ENCODE measurements at regions of chr10 and their contacts with region 1.

Region 1: GRCh38 chr10:132185601-132186487 is 904 bp upstream of the DPYSL4 start:
- DNase-seq: no peak
- H3K4me3 ChIP-seq: peak overlapping the region; percentile 26 to 54
- H3K27ac ChIP-seq: no peak overlapping the region
- H3K4me1 ChIP-seq: peaks cover 21% of the 10 kb centered on the region
- H3K27me3 ChIP-seq: peaks cover 7% of the 10 kb centered on the region
- CTCF ChIP-seq: no peak
- POLR2A ChIP-seq: no peak

Region 2: DNA sequence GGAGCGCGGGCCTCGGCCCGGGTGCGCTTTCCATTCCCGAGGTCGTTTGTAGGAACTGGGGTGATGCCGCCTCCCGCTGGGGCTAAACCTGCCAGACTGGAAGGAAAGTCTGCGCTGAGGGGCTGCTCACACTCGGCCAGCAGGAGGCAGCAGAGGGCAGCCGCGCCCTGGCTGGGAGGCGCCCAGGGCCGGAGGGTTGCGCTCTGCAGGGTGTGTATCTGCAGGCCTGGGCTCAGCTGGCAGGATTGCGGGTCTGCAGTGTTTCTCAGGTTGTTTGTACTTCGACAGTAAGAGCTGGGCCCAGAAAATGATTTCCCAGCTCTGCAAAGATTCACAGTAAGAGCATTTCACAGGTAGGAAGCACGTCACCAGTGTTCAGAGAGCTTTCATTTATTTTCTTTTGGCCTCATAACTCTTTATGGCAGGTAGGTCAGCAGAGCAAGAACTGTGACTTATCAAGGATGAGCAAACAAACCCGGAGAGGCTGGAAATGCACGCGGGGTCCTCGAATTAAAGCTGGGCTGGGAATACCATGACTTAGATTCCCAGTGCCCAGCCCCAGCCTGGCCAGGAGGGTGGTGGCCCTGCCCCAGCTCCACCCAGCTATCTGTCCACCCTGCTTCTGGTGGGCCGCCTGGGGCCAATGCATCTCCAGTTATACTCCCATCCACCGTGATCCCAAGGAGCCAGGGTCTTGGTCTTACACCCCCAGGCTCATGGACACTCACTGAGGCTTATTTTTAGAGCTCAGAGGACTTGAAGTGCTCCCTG is 300.3 kb before region 1 on chr10:
- intact Hi-C with region 1: no loop called
- DNase-seq: no peak
- H3K4me3 ChIP-seq: no peak overlapping the region
- H3K27ac ChIP-seq: no peak overlapping the region
- H3K4me1 ChIP-seq: no peaks in the 10 kb centered on the region
- H3K27me3 ChIP-seq: no peaks in the 10 kb centered on the region
- CTCF ChIP-seq: peak; percentile 85 to 96 (median 93)
- POLR2A ChIP-seq: no peak

Region 3: GRCh38 chr10:132107186-132107948 is 78.5 kb before region 1 on chr10:
- intact Hi-C with region 1: no loop called
- DNase-seq: peak; percentile 82 to 87
- H3K4me3 ChIP-seq: no peak overlapping the region
- H3K27ac ChIP-seq: no peak overlapping the region
- H3K4me1 ChIP-seq: no peaks in the 10 kb centered on the region
- H3K27me3 ChIP-seq: no peaks in the 10 kb centered on the region
- CTCF ChIP-seq: no peak
- POLR2A ChIP-seq: no peak

Region 4: DNA sequence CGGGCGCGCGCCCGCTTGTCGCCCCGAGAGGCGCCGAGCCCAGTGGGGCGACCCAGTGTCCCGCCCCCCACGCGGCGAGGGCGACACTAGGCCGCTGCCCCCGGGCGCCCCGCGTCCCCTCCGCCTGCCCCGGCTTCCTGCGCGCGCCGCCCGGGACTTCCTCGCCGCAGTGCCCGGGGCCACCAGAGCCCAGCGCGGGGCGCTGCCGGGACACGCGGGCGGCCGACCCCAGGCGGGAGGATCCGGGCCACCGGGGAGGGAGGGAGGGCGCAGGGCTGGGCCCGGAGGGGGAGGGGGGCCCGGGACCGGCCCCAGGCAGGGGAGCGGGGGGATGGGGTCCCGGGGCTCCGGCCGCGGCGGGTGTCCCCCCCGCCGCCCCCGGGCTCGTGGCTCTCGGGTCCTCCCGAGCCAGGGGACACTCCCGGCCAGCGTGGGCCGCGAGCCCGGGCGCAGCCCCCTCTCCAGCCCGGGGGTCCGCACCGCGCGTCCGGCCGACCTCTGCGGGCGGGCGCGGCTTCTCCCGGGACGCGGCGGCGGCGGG is 210.7 kb after region 1 on chr10:
- intact Hi-C with region 1: no loop called
- DNase-seq: no peak
- H3K4me3 ChIP-seq: peak overlapping the region; percentile 77 to 80
- H3K27ac ChIP-seq: peak overlapping the region; percentile 96
- H3K4me1 ChIP-seq: peaks cover 59% of the 10 kb centered on the region
- H3K27me3 ChIP-seq: no peaks in the 10 kb centered on the region
- CTCF ChIP-seq: no peak
- POLR2A ChIP-seq: no peak

Region 5: DNA sequence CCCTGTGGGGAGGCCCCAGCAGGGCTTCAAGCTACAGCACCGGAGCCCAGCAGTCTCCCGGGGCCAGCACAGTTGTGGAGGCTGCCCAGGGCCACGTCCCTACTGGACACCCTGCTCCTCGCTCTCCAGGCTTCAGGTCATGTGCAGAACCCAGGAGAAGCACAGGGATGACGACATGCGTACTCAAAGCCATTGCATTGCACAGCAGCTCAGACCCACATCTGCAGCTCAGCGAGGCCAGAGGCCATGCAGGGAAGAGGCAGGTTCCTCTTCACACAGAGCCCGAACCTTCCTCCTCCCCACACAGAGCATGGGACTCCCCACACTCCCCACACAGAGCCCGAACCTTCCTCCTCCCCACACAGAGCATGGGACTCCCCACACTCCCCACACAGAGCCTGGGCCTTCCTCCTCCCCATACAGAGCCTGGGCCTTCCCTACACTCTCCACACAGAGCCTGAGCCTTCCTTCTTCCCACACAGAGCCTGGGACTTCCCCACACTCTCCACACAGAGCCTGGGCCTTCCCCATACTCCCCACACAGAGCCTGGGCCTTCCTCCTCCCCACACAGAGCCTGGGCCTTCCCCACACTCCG is 744.2 kb after region 1 on chr10:
- intact Hi-C with region 1: loop called (anchors 5 kb)
- DNase-seq: no peak
- H3K4me3 ChIP-seq: no peak overlapping the region
- H3K27ac ChIP-seq: no peak overlapping the region
- H3K4me1 ChIP-seq: no peaks in the 10 kb centered on the region
- H3K27me3 ChIP-seq: no peaks in the 10 kb centered on the region
- CTCF ChIP-seq: no peak
- POLR2A ChIP-seq: no peak

Region 6: DNA sequence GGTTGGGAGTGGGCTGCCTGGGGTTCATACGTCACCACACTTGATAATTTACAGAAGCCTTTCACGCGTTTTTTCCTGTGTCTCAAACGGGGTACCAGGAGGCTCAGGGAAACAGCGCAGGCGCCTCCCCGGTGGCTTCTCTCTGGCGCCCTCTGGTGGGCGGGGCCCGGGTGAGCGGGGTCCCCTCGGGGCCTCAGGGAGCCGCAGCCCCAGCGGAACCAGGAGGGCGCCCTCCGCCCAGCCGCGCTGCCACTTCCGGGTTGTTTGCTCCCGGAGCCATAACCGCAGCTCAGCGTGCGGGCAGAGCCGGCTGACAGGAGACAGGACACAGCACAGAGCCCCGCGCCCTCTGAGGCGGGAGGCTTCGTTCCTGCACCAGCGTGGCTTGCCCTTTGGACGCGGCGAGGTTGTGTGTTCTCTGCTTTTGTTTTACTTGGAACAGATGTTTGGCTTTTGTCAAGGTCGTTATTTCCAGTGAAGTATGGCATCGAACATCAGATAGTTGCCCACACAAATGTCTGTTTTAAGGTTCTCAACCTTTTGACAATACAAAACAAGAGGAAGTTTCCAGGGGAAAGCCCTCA is 1334.4 kb after region 1 on chr10:
- intact Hi-C with region 1: no loop called
- DNase-seq: no peak
- H3K4me3 ChIP-seq: peak overlapping the region; percentile 32
- H3K27ac ChIP-seq: no peak overlapping the region
- H3K4me1 ChIP-seq: peaks cover 8% of the 10 kb centered on the region
- H3K27me3 ChIP-seq: no peaks in the 10 kb centered on the region
- CTCF ChIP-seq: peak; percentile 30 to 83 (median 42)
- POLR2A ChIP-seq: no peak